Ovary (tissue), 10 donors: ENCODE measurements at regions of chr10 and their contacts with region 1.

Region 1: DNA sequence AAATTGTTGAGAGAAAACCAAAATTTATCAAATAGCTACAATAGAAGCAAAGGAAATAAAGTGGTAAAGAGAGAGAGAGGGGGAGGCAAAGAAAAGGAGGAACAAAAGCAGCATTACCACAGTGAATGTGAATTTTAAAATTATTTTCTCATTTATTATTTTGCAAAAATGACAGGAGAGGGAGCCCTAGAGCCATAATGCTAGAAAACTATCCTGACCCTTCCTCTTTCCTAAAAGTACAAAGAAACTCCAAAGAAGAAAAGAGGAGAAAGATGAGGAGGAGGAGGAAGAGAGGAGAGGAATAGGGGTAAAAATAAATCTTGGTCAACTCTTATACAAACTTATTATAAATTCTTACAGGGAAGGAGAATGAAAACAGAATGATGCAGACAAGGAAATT is 921.5 kb downstream of the NRG3 start:
- DNase-seq: no peak
- H3K4me3 ChIP-seq: no peak overlapping the region
- H3K27ac ChIP-seq: no peak overlapping the region
- H3K4me1 ChIP-seq: no peaks in the 10 kb centered on the region
- H3K27me3 ChIP-seq: no peaks in the 10 kb centered on the region
- CTCF ChIP-seq: no peak
- EP300 ChIP-seq: no peak
- POLR2A ChIP-seq: no peak

Region 2: DNA sequence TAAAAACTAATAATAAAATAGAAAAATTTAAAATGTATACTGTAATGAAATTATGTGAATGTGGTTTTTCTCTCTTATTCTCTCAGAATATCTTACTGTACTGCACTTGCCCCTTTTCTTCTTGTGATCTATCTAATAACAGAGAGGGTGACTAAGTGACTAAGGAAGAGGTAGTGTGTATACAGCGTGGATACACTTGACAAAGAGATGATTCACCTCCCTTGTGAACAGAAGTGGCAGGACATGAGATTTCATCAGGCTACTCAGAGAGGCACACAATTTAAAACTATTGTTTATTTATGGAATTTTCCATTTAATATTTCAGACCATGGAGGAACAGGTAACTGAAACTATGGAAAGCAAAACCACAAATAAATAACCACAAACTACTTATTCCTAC is 536.2 kb after region 1 on chr10:
- intact Hi-C with region 1: no loop called
- DNase-seq: no peak
- H3K4me3 ChIP-seq: no peak overlapping the region
- H3K27ac ChIP-seq: no peak overlapping the region
- H3K4me1 ChIP-seq: no peaks in the 10 kb centered on the region
- H3K27me3 ChIP-seq: no peaks in the 10 kb centered on the region
- CTCF ChIP-seq: no peak
- EP300 ChIP-seq: no peak
- POLR2A ChIP-seq: no peak

Region 3: GRCh38 chr10:83871187-83872081 is 1074.9 kb after region 1 on chr10:
- intact Hi-C with region 1: loop called in 3 of 4 experiments (anchors 5 to 10 kb)
- DNase-seq: peak; percentile 44 to 73 (median 68)
- H3K4me3 ChIP-seq: no peak overlapping the region
- H3K27ac ChIP-seq: no peak overlapping the region
- H3K4me1 ChIP-seq: no peaks in the 10 kb centered on the region
- H3K27me3 ChIP-seq: no peaks in the 10 kb centered on the region
- CTCF ChIP-seq: peak; percentile 40 to 83 (median 62)
- EP300 ChIP-seq: no peak
- POLR2A ChIP-seq: no peak